PC-3 (cell line): ENCODE measurements at regions of chr10 and their contacts with region 1.

Region 1: GRCh38 chr10:59906417-59907202 is at the start of gene CCDC6:
- DNase-seq: peak; percentile 98
- ATAC-seq: peak; percentile 77
- H3K4me3 ChIP-seq: peak within 1 kb of the TSS; percentile 93
- H3K27ac ChIP-seq: peak within 1 kb of the TSS; percentile 70
- H3K4me1 ChIP-seq: peaks cover 45% of the 10 kb centered on the region
- H3K27me3 ChIP-seq: no peaks in the 10 kb centered on the region
- CTCF ChIP-seq: peak; percentile 77
- total RNA-seq, gene CCDC6: 37.6 and 46.1 TPM in 2 replicates

Region 2: DNA sequence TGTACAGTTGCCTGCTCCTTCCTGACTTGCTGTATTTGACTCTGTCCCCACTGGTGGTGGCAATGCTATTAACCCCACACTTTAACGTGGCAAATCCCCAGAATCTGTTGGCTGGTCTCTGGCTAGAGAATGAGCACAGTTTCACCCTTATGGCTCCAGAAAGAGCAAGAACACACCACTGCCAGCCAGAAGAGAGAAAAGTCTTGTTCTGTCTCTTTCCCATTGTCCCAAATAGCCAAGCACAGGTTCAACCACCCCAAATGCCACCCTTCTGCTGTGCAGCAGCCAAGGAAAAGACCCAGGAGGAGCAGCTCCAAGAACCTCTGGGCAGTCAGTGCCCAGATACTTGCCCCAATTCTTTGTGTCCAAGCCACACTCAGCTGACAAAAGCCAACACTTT is 208.3 kb before region 1 on chr10:
- CTCF ChIA-PET with region 1: no interaction called
- POLR2A ChIA-PET with region 1: no interaction called
- intact Hi-C with region 1: no loop called
- DNase-seq: no peak
- ATAC-seq: no peak
- H3K4me3 ChIP-seq: no peak overlapping the region
- H3K27ac ChIP-seq: no peak overlapping the region
- H3K4me1 ChIP-seq: peaks cover 16% of the 10 kb centered on the region
- H3K27me3 ChIP-seq: no peaks in the 10 kb centered on the region
- CTCF ChIP-seq: no peak

Region 3: DNA sequence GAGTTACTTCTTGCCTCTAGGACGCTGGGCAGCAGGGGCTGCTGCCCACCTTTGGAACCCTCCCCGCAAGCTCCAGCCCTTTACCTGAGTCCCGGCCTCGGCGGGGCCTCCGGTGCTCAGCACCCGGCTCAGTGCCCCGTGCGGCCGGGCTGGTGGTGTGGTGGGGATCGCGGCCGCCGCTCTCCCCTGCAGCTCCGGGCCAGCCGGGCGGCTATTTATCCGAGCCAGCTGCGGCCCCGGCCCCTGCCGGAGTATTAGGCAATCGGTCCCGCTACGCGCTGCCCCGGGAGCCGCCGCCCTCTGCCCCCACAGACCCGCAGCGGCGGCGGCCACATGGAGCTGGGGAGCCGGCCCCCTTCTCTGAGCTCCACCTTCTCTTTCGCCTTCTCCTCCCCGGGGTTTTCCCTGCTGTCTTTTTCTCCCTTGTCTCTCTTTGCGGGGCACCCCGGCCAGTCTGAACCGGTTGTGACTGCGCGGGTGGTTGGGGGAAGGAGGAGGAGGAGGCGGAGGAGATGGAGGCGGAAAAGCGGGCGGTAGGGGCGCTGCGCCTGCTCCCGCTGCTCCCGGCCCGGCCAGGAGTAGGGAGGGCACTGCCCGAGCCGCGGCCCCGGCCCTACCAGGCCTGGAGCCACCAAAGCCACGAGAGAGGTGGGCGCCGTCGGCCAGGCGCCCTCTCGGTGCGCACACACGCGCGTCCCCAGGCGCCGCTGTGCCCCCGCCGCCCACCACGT is 197.1 kb before region 1 on chr10 and contains the start of gene SLC16A9:
- CTCF ChIA-PET with region 1: no interaction called
- POLR2A ChIA-PET with region 1: no interaction called
- intact Hi-C with region 1: loop called (anchors 5 kb)
- DNase-seq: peak; percentile 83
- ATAC-seq: peak; percentile 82
- H3K4me3 ChIP-seq: peak within 1 kb of the TSS; percentile 85
- H3K27ac ChIP-seq: peak within 1 kb of the TSS; percentile 43
- H3K4me1 ChIP-seq: peaks cover 27% of the 10 kb centered on the region
- H3K27me3 ChIP-seq: no peaks in the 10 kb centered on the region
- CTCF ChIP-seq: peak; percentile 60
- total RNA-seq, gene SLC16A9: 12.8 and 17.4 TPM in 2 replicates

Region 4: GRCh38 chr10:59865101-59865500 is 41.5 kb before region 1 on chr10:
- CTCF ChIA-PET with region 1: interaction called, 12 read pairs
- POLR2A ChIA-PET with region 1: interaction called, 5 read pairs
- intact Hi-C with region 1: loop called (anchors 2 kb)
- DNase-seq: peak; percentile 90
- ATAC-seq: peak; percentile 81
- H3K4me3 ChIP-seq: no peak overlapping the region
- H3K27ac ChIP-seq: no peak overlapping the region
- H3K4me1 ChIP-seq: peaks cover 19% of the 10 kb centered on the region
- H3K27me3 ChIP-seq: no peaks in the 10 kb centered on the region
- CTCF ChIP-seq: peak; percentile 93

Region 5: DNA sequence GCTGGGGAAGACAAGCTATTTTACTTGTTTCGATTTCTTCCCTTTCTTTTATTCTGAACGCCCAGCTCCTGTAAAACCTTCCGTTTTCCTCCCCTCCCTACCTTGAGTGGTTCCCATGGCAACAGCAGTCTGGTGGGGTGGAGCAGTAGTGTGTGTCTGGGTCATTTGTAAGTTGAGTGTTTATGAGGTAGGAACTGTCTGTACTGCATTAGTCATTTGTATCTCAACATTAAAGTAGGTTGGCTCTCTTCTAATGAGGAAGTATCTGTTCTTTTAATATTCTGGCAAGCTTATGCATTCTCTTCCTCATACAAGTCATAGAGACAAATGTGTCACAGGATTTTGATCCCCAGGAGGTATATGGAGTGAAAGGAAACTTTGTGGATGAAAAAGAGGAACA is 85.1 kb after region 1 on chr10:
- CTCF ChIA-PET with region 1: interaction called, 9 read pairs
- POLR2A ChIA-PET with region 1: interaction called, 5 read pairs
- intact Hi-C with region 1: loop called (anchors 1 kb)
- DNase-seq: peak; percentile 96
- ATAC-seq: peak; percentile 97
- H3K4me3 ChIP-seq: peak overlapping the region; percentile 39; the same call in 1 of the 2 replicates
- H3K27ac ChIP-seq: peak overlapping the region; percentile 75
- H3K4me1 ChIP-seq: peaks cover 32% of the 10 kb centered on the region
- H3K27me3 ChIP-seq: no peaks in the 10 kb centered on the region
- CTCF ChIP-seq: no peak

Region 6: GRCh38 chr10:60032723-60033122 is 126.1 kb after region 1 on chr10:
- CTCF ChIA-PET with region 1: interaction called, 4 read pairs
- POLR2A ChIA-PET with region 1: no interaction called
- intact Hi-C with region 1: loop called (anchors 1 kb)
- DNase-seq: peak; percentile 96
- ATAC-seq: peak; percentile 89
- H3K4me3 ChIP-seq: no peak overlapping the region
- H3K27ac ChIP-seq: no peak overlapping the region
- H3K4me1 ChIP-seq: peaks cover 5% of the 10 kb centered on the region; the same call in 1 of the 2 replicates
- H3K27me3 ChIP-seq: no peaks in the 10 kb centered on the region
- CTCF ChIP-seq: peak; percentile 100